ENCODE measurements at regions of chr2 and their contacts with region 1.

Region 1: GRCh38 chr2:144583741-144584453 is 64.0 kb upstream of the ZEB2 start:
- DNase-seq: peak; percentile 16
- H3K4me3 Mint-ChIP-seq: no peak overlapping the region
- H3K27ac Mint-ChIP-seq: no peak overlapping the region
- H3K4me1 Mint-ChIP-seq: peaks cover 9% of the 10 kb centered on the region
- H3K27me3 Mint-ChIP-seq: peaks cover 20% of the 10 kb centered on the region

Region 2: DNA sequence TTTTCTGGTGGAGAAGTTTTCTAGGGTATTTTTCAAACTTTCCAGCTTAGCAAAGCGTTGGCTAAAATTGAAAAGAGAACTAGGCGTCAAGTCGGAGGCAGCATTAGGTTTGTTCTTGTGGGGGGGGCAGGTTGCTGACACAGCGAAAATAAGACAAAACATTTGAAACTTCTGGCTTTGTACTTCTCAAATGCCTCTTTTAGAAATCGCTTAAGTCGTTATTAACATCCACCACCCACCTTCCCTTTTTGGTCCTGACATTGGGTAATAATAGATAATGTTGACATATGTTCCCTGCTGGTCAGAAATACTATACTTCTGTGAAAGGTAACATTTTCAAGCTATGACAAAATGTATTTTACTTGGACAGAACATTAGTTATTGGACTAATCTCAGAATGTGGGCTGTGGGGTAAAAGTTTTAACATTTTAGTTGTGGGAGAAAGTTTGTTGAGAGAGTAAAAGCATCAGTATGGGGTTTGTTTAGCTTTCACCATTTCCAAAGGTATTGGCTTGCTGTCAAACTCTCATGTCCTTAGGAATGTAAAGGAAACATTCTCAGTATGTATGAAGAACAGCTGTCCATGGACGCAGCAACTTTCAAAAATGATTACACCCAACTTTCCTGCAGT is 24.1 kb after region 1 on chr2:
- CTCF ChIA-PET with region 1: no interaction called
- POLR2A ChIA-PET with region 1: no interaction called
- intact Hi-C with region 1: loop called (anchors 2 kb)
- DNase-seq: no peak
- H3K4me3 Mint-ChIP-seq: no peak overlapping the region
- H3K27ac Mint-ChIP-seq: no peak overlapping the region
- H3K4me1 Mint-ChIP-seq: peaks cover 4% of the 10 kb centered on the region
- H3K27me3 Mint-ChIP-seq: peaks cover 20% of the 10 kb centered on the region

Region 3: GRCh38 chr2:144924827-144925226 is 340.9 kb after region 1 on chr2:
- CTCF ChIA-PET with region 1: no interaction called
- POLR2A ChIA-PET with region 1: no interaction called
- intact Hi-C with region 1: loop called (anchors 5 kb)
- DNase-seq: no peak
- H3K4me3 Mint-ChIP-seq: no peak overlapping the region
- H3K27ac Mint-ChIP-seq: no peak overlapping the region
- H3K4me1 Mint-ChIP-seq: peaks cover 4% of the 10 kb centered on the region
- H3K27me3 Mint-ChIP-seq: no peaks in the 10 kb centered on the region

Measured in activated CD4-positive, alpha-beta memory T cell treated with anti-CD3 and anti-CD28 coated beads for 36 hours (primary cell).